ENCODE measurements at regions of chr4 and their contacts with region 1.

Region 1: GRCh38 chr4:139030614-139031235 is 15.1 kb downstream of the NOCT start:
- DNase-seq: peak; percentile 40
- ATAC-seq: peak; percentile 40

Region 2: DNA sequence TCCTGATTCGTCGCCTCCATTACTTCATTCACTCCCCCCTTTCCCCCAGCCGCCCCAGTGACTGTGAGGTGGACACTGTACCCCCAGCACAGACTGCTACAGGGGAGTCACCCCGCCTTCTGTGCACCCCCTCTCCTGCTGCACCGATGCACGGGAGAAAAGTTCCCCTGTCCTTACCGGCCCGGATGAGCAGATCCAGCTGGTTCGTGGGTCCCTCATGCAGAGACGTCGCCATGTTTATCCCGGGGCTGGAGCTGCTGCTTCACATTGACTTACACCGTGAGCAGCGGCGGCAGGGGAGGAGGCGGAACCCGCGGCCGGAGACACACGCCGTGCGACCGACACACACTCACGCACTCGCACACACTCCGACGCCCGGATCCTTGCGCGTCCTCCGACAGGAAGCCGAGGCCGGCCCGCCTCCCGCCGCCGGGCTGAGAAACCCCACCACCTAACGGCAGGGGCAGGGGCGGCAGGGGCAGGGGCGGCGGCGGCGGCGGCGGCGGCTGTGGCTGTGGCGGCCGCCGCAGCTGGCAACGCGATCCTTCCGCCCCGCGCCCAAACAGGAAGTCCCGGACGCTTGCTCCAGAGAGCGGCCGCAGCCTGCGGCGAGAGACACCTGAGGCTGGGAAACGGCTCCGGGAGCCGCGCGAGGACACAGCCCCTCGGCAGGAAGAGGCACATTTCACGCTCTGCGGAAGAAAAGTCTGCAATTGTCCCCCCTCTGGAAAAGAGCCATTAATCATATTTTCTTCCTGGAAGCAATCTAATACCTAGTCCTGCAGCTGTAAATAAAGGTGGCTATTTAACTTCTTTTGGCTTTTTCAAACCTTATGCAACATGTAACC is 53.5 kb after region 1 on chr4:
- intact Hi-C with region 1: loop called (anchors 10 kb)
- DNase-seq: peak; percentile 93
- ATAC-seq: peak; percentile 81

Region 3: GRCh38 chr4:139177868-139178611 is 147.3 kb after region 1 on chr4:
- intact Hi-C with region 1: loop called (anchors 10 kb)
- DNase-seq: peak; percentile 97
- ATAC-seq: peak; percentile 86

Region 4: GRCh38 chr4:139295206-139295941 is 264.6 kb after region 1 on chr4:
- intact Hi-C with region 1: no loop called
- DNase-seq: peak; percentile 99
- ATAC-seq: peak; percentile 96

Measured in left ventricle myocardium superior (tissue), 1 donor.